ENCODE measurements at regions of chr1 and their contacts with region 1.

Region 1: DNA sequence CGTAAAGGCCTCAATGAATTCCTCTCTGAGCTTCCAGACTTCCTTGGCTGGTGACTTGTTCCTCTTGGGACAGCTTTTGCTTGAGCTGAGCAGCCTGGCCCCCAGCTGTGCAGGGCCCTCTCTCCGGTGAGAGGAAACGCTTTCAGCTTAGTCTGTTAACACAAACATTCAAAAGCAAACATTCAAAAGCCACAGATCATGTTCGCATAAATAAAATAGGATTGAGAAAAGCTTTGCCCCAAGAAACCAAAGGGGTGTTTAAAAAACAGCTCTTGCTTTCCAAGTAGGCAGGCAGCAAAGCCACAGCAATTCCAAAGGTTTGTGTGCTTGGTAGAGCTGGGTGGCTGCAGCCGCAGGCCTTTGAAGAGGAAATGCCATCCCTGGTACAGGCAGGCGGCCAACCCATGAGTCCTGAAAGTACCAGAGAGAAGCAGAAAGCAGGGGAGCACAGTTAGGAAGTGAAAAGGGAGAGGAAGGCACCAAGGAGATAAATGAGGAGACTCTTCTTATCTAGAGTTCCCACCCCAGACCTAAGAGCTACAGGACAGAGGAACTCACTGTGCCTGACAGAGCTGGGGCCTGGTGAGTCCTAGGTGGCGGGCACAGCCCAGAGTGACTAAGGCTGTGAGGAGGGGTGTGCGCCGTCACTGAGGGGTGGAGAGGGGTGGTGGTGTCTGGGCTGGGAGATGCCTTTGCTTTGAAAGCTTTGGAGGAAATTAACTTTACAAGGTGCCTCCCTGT is 48.4 kb downstream of the CCN1 start:
- DNase-seq: peak; percentile 44
- ATAC-seq: peak; percentile 87
- H3K4me3 Mint-ChIP-seq: no peak overlapping the region
- H3K27ac Mint-ChIP-seq: peak overlapping the region; percentile 87
- H3K4me1 Mint-ChIP-seq: peaks cover 18% of the 10 kb centered on the region
- H3K27me3 Mint-ChIP-seq: no peaks in the 10 kb centered on the region
- CTCF ChIP-seq: no peak

Region 2: DNA sequence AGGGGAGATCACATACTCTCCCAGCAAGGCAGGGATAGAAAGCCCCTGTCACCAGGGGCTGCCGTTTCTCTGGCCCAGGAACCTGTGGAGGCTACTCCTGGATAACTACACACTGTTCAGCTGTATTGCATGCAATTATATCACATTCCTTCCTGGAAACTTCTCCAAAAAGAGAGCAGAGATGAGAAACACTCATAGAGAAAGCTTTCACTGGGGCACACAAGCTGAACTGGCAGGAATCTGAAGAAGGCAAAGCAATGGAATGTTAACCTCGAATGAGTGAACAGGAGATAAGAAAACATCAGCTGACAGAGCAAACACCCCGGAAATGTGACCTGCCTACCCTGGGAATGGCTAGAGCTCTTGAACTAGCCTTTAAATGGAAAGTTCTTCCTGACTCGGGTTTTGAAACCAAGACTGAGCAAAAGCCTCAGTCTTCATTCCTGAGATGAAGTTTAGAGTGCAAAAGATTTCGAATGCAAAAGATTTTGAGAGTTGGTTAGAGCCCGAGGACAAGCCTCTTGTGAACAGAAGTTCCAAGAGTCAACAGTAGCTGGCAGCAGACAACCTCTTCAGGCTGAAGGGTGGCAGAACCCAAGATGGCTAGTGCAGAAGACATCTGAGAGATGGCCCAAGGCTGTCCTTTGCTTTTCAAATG is 16.1 kb before region 1 on chr1:
- CTCF ChIA-PET with region 1: interaction called, 11 read pairs
- POLR2A ChIA-PET with region 1: interaction called, 3 read pairs
- DNase-seq: no peak
- ATAC-seq: peak; percentile 73
- H3K4me3 Mint-ChIP-seq: no peak overlapping the region
- H3K27ac Mint-ChIP-seq: peak overlapping the region; percentile 17
- H3K4me1 Mint-ChIP-seq: peaks cover 25% of the 10 kb centered on the region
- H3K27me3 Mint-ChIP-seq: no peaks in the 10 kb centered on the region
- CTCF ChIP-seq: no peak